Motor neuron (in vitro differentiated cells): ENCODE measurements at regions of chr6 and their contacts with region 1.

Region 1: DNA sequence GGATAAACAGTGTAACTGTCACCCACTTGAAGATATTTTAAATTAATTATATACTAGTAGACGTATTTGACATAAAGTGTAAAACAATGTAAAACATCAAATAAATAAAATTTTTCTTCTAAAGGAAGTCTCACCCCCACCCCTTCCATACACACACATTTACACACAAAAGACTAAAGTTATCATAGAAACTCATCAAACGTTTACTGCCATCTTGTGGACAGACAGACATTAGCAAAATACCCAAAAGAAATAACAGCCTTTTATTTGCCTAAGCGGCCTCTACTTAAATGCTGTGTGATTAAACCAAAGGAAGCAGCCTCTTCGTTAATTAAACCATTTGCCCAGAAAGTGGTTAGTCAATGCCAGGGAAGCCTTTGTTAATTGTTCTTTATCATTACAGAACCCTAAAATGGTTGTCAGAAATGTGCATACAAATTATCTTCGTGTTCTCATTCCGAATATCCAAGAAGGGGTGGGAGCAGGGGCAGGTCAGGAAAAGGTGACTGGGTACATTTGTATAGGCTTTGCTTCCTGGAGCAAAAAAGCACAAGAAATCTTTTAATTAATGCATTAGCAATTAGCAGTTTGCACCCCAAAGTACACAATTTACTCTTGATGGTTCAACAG is 176.2 kb upstream of the SASH1 start:
- ATAC-seq: peak in 4 of 8 experiments; percentile 37 to 69 (median 52)
- H3K4me3 ChIP-seq: no peak overlapping the region
- H3K27ac ChIP-seq: no peak overlapping the region
- H3K4me1 ChIP-seq: peaks cover 14 to 20% of the 10 kb centered on the region in 2 donors

Region 2: DNA sequence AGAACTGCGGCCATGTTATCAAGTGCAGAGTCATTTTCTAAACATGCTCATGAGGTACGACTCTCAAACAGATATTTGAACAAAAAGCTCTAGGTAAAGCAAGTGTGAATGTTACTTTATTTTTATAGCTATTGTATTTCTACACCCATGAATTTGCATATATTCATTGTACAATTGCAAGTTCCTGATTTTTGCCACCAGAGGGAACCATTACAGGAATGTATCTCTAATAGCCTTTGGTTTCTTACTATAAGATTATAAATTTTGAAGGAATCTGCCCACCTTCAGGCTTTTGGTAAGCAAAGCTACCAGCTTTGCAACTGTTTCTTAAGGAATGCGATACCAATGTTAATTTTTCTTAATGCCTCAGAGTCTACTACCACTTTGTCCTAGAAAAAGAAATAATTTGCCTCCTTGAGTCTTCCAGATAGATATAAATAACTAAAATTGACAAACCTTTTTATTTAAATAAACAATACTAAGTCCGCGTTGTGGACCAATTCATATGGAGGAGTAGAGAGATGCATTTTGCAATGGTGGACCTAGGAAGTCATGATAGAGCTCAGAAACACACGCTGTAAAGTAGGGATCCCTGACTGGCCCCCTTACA is 783.4 kb before region 1 on chr6:
- in situ Hi-C with region 1: loop called in 1 of 9 experiments (anchors 25 kb)
- ATAC-seq: no peak
- H3K4me3 ChIP-seq: no peak overlapping the region
- H3K27ac ChIP-seq: no peak overlapping the region
- H3K4me1 ChIP-seq: no peaks in the 10 kb centered on the region

Region 3: DNA sequence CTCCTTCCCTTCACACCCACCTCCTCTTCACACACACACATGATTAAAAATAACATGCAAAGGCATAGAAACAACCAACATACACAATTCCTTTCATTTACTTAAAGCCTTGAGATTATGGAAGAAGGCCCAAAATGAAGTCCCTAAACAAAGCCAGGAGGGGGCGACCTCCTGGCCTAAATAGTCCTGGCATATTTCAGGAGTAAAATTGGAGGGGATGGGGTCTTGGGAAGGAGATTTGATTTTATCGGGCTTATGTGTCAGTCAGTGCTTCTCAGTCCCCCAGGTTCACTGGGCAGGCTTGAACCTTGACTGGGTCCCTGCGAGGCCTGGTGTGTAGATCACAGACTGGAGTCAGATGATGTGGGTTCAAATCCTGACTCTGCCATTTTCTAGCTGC is 391.6 kb before region 1 on chr6:
- in situ Hi-C with region 1: loop called in 1 of 9 experiments (anchors 25 kb)
- ATAC-seq: no peak
- H3K4me3 ChIP-seq: no peak overlapping the region
- H3K27ac ChIP-seq: no peak overlapping the region
- H3K4me1 ChIP-seq: peaks cover 0 to 4% of the 10 kb centered on the region in 2 donors

Region 4: DNA sequence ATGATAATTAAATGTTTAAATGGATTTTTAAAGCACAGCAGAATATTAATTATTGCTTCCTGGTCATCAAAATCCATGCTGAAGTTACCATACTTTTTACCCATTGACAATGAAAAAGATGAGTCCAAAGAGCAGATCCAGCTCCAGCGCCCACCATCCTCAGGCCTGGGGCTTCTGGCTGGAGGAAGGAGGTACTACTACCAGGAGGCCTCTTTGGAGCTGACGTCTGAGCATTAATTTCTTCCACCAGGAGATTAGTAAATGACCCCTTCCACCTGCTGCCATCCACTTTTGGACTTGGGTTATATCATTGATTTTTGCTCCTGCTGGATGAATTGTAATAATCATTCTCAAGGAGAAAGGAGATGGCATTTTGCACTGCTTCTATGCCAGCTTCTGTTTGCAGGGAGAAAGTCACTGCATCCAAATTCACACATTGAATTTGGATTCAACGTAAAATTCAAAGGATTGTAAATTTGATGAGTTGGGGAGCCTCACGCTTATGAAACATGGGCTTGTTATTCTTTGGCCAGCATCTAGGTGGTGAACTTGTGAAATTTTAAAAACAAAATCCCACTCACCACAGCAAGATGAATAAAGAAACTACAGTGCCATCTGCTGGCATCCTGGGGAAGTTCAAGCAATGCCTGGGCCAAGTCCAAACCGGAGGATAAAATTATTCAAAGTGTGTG is 298.0 kb after region 1 on chr6:
- in situ Hi-C with region 1: loop called in 1 of 9 experiments (anchors 25 kb)
- ATAC-seq: peak; percentile 72 to 88 (median 76)
- H3K4me3 ChIP-seq: no peak overlapping the region
- H3K27ac ChIP-seq: no peak overlapping the region
- H3K4me1 ChIP-seq: peaks cover 5 to 10% of the 10 kb centered on the region in 2 donors